Dorsolateral prefrontal cortex (tissue), 120 donors: ENCODE measurements at regions of chr14 and their contacts with region 1.

Region 1: GRCh38 chr14:35341446-35342159 is 49.4 kb downstream of the PSMA6 start:
- DNase-seq: peak; percentile 49 to 99 (median 95)
- H3K4me3 ChIP-seq: peak overlapping the region in 56 of 59 donors; percentile 0 to 60 (median 38)
- H3K27ac ChIP-seq: peak overlapping the region; percentile 70 to 98 (median 95)
- H3K27me3 ChIP-seq: no peaks in the 10 kb centered on the region
- CTCF ChIP-seq: peak in 13 of 56 donors; percentile 4 to 46 (median 20)

Region 2: GRCh38 chr14:34554540-34555333 is 786.9 kb before region 1 on chr14:
- intact Hi-C with region 1: no loop called
- DNase-seq: peak in 1 of 10 donors; percentile 13
- H3K4me3 ChIP-seq: peak overlapping the region in 5 of 59 donors; percentile 16 to 24 (median 20)
- H3K27ac ChIP-seq: peak overlapping the region in 49 of 59 donors; percentile 0 to 79 (median 54)
- H3K27me3 ChIP-seq: no peaks in the 10 kb centered on the region
- CTCF ChIP-seq: no peak

Region 3: GRCh38 chr14:35292051-35292769 is 49.4 kb before region 1 on chr14 and contains the start of gene PSMA6:
- intact Hi-C with region 1: loop called (anchors 1 to 5 kb)
- DNase-seq: peak; percentile 99 to 100 (median 99)
- H3K4me3 ChIP-seq: peak within 1 kb of the TSS; percentile 65 to 99 (median 93)
- H3K27ac ChIP-seq: peak within 1 kb of the TSS; percentile 41 to 98 (median 89)
- H3K27me3 ChIP-seq: no peaks in the 10 kb centered on the region
- CTCF ChIP-seq: peak in 30 of 56 donors; percentile 6 to 56 (median 30)
- total RNA-seq, gene PSMA6: 60.5 to 148 (median 104) TPM

Region 4: GRCh38 chr14:35385042-35385839 is 43.6 kb after region 1 on chr14:
- intact Hi-C with region 1: loop called (anchors 5 kb)
- DNase-seq: peak; percentile 62 to 95 (median 82)
- H3K4me3 ChIP-seq: peak overlapping the region in 8 of 59 donors; percentile 6 to 31 (median 13)
- H3K27ac ChIP-seq: peak overlapping the region; percentile 70 to 97 (median 89)
- H3K27me3 ChIP-seq: no peaks in the 10 kb centered on the region
- CTCF ChIP-seq: peak in 2 of 56 donors; percentile 7 to 25